Left colon (tissue), 2 donors: ENCODE measurements at regions of chr3 and their contacts with region 1.

Region 1: DNA sequence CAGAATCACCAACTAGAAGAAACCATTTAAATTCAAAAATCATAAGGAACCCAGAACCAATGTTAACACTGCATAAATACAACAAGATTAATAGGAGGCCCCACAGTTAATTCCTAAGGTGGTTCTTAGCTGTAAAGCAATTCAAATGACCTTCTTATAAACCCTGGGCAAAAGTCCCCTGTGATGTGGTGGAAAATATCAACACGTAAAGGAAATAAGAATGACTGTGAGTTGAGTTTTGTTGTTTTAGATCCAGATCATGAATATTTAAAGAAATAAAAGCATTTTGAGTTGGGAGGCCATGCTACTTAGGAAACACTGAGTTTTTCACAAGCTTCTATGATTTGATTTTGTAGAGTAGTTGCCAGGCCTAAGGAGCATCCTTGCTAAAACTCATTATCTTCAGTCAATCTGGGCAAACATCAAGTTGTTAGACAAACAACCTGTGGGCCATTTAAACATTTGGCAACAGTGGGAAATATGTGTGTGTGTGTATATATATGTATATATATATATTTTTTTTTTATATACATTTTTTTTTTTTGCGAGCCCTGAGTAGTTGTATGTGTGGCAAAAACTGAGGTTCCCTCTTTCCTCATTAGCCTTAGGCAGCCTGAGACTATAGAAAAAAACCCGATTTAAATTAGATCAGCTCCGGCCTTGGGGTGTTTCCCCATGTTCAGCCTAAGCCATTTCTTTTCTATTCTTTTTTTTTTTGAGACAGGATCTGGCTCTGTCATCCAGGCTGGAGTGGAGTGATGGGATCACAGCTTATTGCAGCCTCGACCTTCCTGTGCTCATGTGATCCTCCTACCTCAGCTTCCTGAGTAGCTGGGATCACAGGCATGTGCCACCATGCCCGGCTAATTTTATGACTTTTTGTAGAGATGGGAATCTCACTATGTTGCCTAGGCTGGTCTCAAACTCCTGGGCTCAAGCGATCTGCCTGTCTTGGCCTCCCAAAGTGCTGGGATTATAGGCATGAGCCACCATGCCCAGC is 8.0 kb upstream of the PXK start:
- DNase-seq: no peak
- ATAC-seq: peak; percentile 10

Region 2: GRCh38 chr3:58414538-58415197 is 90.0 kb after region 1 on chr3:
- intact Hi-C with region 1: loop called in 1 of 2 experiments (anchors 5 kb)
- DNase-seq: peak in 1 of 2 donors; percentile 42
- ATAC-seq: peak; percentile 46